Posterior cingulate gyrus (tissue), 11 donors: ENCODE measurements at regions of chr9 and their contacts with region 1.

Region 1: DNA sequence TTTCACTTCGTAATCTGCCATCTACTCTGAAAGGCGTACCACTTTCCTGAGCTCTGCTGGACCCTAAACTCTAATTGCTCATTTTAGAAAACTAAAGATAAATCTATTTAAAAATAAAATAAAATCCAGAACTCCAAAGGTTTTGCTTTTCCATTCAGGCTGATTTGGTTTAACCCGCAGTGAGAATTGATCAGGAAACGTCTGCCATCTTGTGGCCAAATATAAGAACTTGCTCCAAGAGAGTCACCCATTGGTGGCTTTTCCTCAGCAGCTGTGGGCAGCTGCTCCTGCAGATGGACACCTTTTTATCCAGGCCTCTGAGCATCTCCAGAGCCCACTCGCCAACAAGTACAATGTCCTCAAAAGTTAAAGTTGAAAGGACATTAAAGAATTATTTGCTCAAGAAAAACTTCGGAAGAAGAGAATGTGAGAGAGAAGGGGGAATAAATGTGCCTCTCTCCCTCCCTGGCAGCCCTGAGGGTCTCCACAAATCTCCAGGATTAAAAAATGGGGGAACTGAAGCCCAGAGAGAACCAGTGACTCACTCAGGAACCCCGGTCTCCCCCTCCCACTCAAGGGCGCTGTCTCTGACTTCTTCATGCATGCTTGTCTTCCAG is 4.1 kb downstream of the SAXO1 start:
- DNase-seq: peak in 5 of 10 donors; percentile 16 to 86 (median 31)

Region 2: GRCh38 chr9:17531642-17532254 is 1497.2 kb before region 1 on chr9:
- intact Hi-C with region 1: loop called (anchors 5 kb)
- DNase-seq: peak in 5 of 10 donors; percentile 22 to 81 (median 23)

Region 3: GRCh38 chr9:17810728-17811571 is 1218.0 kb before region 1 on chr9:
- intact Hi-C with region 1: loop called (anchors 5 kb)
- DNase-seq: peak in 5 of 10 donors; percentile 24 to 65 (median 54)

Region 4: GRCh38 chr9:18255158-18255629 is 773.7 kb before region 1 on chr9:
- intact Hi-C with region 1: loop called (anchors 1 kb)
- DNase-seq: peak; percentile 48 to 97 (median 82)

Region 5: GRCh38 chr9:18442629-18443491 is 586.1 kb before region 1 on chr9:
- intact Hi-C with region 1: loop called (anchors 10 kb)
- DNase-seq: peak; percentile 34 to 96 (median 78)

Region 6: GRCh38 chr9:19087106-19088000 is 58.4 kb after region 1 on chr9:
- intact Hi-C with region 1: no loop called
- DNase-seq: no peak